Endothelial cell of umbilical vein (primary cell): ENCODE measurements at regions of chr11 and their contacts with region 1.

Region 1: DNA sequence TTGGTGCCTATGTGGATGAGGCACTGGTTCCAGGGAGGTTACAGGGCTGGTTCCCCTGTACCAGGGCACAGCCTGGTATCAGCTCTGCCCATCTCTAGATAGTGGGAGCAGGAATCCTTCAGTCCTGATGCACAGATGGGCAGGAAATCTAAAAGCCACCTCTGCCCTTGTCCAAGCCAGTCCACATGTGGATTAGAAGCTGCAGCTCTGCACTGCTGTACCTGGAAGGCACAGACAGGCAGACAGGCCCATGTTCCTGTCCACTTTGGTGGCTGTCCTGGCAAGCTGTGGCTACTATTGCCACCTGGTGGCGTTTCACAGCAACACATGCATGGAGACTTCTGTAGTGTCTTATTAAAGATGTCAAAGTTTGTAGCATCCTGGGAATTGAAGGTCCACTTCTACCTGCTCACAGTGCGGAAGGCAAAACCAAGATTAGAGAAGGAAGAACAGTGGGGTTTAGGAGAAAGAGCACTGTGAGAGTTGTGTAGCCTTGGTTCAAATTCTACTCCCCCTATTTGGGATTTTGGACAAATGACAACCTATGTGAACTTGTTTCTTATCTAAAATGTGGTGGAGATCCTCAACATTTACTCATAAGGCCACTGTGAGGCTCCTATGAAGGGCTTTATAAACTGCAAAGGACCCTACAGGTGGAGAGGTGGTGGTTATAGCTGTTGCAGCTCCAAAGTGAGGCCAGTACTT is 30.1 kb downstream of the NAV2 start:
- DNase-seq: peak; percentile 82
- H3K4me3 ChIP-seq: no peak overlapping the region
- H3K27ac ChIP-seq: no peak overlapping the region
- H3K4me1 ChIP-seq: peaks cover 8% of the 10 kb centered on the region
- H3K27me3 ChIP-seq: no peaks in the 10 kb centered on the region
- CTCF ChIP-seq: peak; percentile 75 to 76
- POLR2A ChIP-seq: no peak

Region 2: GRCh38 chr11:19553683-19554333 is 188.9 kb before region 1 on chr11:
- CTCF ChIA-PET with region 1: interaction called, 235 read pairs
- POLR2A ChIA-PET with region 1: no interaction called
- dilution Hi-C with region 1: no loop called
- intact Hi-C with region 1: loop called (anchors 1 kb)
- DNase-seq: peak; percentile 65
- H3K4me3 ChIP-seq: no peak overlapping the region
- H3K27ac ChIP-seq: no peak overlapping the region
- H3K4me1 ChIP-seq: no peaks in the 10 kb centered on the region
- H3K27me3 ChIP-seq: no peaks in the 10 kb centered on the region
- CTCF ChIP-seq: peak; percentile 79 to 81
- POLR2A ChIP-seq: no peak

Region 3: DNA sequence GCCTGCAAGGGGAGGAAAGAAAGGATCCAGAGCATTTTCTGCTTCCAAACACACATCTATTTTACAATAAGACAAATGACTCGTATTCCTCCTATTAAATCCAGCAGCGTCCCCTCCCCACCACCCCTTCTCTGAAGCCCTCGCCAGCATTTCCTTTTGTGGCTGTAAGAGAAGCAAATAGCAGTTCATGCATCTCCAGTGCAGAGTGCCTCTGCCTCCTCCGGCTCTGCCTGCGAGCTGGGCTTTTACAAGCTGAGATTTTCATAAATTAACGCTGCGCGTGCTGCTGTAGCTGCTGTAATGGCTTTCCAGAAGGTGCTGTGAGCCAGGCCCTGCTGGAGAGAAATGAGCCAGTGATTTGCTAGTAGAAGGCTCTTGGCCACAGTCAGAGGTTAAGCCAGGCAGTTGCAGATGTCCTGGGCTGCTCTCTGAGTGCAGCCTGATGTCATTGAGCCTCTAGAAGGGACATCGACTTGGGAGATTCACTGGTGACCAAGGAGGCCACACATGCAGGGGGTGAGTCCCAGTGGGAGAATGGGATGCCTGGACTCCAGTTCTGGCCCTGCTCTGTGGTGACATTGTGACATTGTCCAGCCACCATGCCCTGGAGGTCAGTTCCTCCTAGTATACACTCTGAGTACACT is 164.6 kb before region 1 on chr11:
- CTCF ChIA-PET with region 1: interaction called, 11 read pairs
- POLR2A ChIA-PET with region 1: no interaction called
- dilution Hi-C with region 1: no loop called
- intact Hi-C with region 1: loop called (anchors 1 kb)
- DNase-seq: peak; percentile 86
- H3K4me3 ChIP-seq: peak overlapping the region in 1 of 3 experiments; percentile 25
- H3K27ac ChIP-seq: peak overlapping the region; percentile 78
- H3K4me1 ChIP-seq: peaks cover 25% of the 10 kb centered on the region
- H3K27me3 ChIP-seq: no peaks in the 10 kb centered on the region
- CTCF ChIP-seq: no peak
- POLR2A ChIP-seq: no peak

Region 4: DNA sequence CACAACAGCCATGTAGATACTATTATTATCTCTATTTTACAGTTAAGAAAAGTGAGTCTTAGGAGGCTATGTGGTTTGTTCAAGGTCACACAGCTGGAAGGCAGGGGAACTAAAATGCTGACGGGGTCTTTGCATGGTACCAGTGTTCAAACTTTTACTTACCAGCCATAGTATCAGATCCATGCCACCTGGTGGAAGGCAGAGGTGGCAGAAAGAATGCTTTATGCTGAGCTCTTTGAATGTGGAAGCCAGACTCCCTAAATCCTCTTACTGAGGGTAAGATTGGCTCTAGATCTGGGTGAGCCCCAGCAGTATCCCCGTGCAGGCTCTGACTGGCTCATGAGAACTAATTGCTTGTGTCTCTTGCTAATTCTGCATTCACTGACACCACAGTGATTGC is 84.4 kb before region 1 on chr11:
- CTCF ChIA-PET with region 1: interaction called, 16 read pairs
- POLR2A ChIA-PET with region 1: no interaction called
- dilution Hi-C with region 1: no loop called
- intact Hi-C with region 1: loop called (anchors 5 kb)
- DNase-seq: no peak
- H3K4me3 ChIP-seq: no peak overlapping the region
- H3K27ac ChIP-seq: no peak overlapping the region
- H3K4me1 ChIP-seq: peaks cover 9% of the 10 kb centered on the region
- H3K27me3 ChIP-seq: no peaks in the 10 kb centered on the region
- CTCF ChIP-seq: peak; percentile 10 to 35
- POLR2A ChIP-seq: no peak

Region 5: GRCh38 chr11:19723572-19724342 is 19.0 kb before region 1 on chr11:
- CTCF ChIA-PET with region 1: interaction called, 21 read pairs
- POLR2A ChIA-PET with region 1: no interaction called
- dilution Hi-C with region 1: no loop called
- intact Hi-C with region 1: no loop called
- DNase-seq: peak; percentile 72
- H3K4me3 ChIP-seq: no peak overlapping the region
- H3K27ac ChIP-seq: peak overlapping the region; percentile 65
- H3K4me1 ChIP-seq: peaks cover 25% of the 10 kb centered on the region
- H3K27me3 ChIP-seq: no peaks in the 10 kb centered on the region
- CTCF ChIP-seq: no peak
- POLR2A ChIP-seq: no peak